Natural killer cell (primary cell): ENCODE measurements at regions of chr7 and their contacts with region 1.

Region 1: DNA sequence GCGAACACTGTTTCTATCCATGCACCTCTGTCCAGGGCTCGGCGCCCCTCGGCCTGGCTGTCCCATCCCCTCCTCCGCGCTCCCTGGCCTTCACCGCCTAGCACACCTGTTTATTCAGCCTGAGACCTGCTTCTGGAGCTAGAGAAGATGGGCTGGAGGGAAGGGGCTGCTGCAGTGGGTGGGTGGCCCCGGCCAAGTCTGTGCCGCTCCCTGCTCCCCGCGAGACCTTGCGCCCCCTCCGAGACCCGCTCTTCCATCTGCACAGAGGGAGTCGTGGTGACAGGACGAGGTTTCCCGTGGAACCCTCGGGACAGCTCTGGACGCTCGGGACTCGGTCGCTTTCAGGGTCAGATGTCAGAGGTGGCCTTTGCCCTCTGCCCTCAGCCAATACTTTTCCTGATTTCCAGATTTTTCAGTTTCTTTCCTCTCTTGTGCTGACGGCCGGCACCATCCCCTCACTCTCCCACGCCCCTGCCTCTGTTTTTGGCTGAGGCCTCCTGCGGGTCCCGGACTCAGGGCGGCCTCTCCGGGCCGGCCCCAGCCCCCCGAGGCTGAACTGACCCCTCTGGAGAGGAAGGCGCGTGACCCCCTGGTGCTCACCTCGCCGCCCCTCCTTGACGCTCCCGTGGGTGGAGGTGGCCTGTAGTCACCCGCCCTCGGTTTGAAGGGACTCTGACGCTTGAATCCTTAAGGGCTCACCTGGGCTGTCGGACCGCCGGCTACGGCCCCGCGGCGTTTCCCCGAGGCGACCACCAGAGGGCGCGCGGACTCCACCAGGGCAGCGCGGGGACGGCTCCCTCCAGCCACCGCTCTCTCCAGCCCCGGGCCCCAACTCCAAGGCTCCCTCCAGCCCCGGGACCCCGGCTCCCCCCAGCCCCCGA is 15.6 kb downstream of the SHH start:
- DNase-seq: peak; percentile 64 to 72
- ATAC-seq: peak; percentile 63 to 95 (median 72)
- H3K4me3 ChIP-seq: no peak overlapping the region
- H3K4me3 Mint-ChIP-seq: no peak overlapping the region
- H3K27ac ChIP-seq: no peak overlapping the region
- H3K27ac Mint-ChIP-seq: no peak overlapping the region
- H3K4me1 ChIP-seq: peaks cover 7% of the 10 kb centered on the region
- H3K4me1 Mint-ChIP-seq: peaks cover 0 to 7% of the 10 kb centered on the region in 2 donors
- H3K27me3 ChIP-seq: peaks cover 2% of the 10 kb centered on the region
- H3K27me3 Mint-ChIP-seq: peaks cover 21 to 34% of the 10 kb centered on the region in 2 donors
- CTCF ChIP-seq: peak; percentile 90

Region 2: GRCh38 chr7:155724327-155725005 is 72.2 kb before region 1 on chr7:
- intact Hi-C with region 1: no loop called
- DNase-seq: peak in 1 of 2 donors; percentile 16
- ATAC-seq: no peak
- H3K4me3 ChIP-seq: no peak overlapping the region
- H3K4me3 Mint-ChIP-seq: no peak overlapping the region
- H3K27ac ChIP-seq: peak overlapping the region; percentile 35
- H3K27ac Mint-ChIP-seq: peak overlapping the region in 1 of 2 donors; percentile 33
- H3K4me1 ChIP-seq: peaks cover 3% of the 10 kb centered on the region
- H3K4me1 Mint-ChIP-seq: peaks cover 44 to 55% of the 10 kb centered on the region in 2 donors
- H3K27me3 ChIP-seq: no peaks in the 10 kb centered on the region
- H3K27me3 Mint-ChIP-seq: no peaks in the 10 kb centered on the region
- CTCF ChIP-seq: no peak

Region 3: DNA sequence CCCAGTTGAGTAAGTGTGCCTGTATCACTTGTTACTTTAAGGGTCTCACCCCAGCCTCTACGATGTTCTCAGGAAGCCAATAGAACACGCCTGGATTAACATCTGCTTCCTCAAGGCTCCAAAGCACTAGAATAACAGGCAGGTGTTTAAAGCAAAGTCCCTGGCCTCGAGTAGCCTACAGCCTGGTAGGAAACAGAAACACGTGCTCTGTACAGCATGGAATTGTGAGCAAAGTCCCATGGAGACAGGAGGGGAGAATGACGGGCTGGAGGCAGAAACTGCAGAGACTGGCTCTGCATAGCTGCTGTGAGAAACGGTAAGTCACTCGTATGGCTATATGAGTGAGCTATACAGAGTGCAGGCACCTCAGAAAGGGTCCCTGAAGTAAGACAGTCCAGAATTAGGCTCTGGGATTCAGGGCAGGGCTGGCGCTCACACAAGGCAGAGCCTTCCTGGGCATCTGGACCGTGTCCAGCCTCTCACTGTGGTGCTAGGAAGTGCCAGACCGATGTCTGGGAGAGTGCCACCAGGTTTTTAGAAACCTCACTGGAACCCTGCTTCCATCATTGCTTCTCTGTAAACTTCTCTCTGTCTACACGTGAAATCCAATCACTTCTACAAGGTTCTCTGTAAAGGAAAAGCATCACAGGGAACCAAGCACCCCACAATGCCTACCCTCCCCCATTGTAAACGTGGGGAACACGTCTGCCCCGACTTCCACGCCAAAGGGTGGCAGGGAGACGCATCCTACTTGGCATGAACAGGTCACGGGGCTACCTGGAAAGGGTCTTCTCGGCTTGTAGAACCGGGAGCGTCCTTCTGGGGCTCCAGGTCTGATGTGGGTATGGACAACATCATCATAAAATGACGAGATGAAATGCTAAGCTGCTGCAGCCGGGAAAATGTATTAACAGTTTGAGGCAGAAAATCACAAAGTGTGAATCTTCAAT is 54.4 kb after region 1 on chr7:
- intact Hi-C with region 1: no loop called
- DNase-seq: no peak
- ATAC-seq: no peak
- H3K4me3 ChIP-seq: no peak overlapping the region
- H3K4me3 Mint-ChIP-seq: no peak overlapping the region
- H3K27ac ChIP-seq: no peak overlapping the region
- H3K27ac Mint-ChIP-seq: no peak overlapping the region
- H3K4me1 ChIP-seq: no peaks in the 10 kb centered on the region
- H3K4me1 Mint-ChIP-seq: no peaks in the 10 kb centered on the region
- H3K27me3 ChIP-seq: no peaks in the 10 kb centered on the region
- H3K27me3 Mint-ChIP-seq: peaks cover 3 to 10% of the 10 kb centered on the region in 2 donors
- CTCF ChIP-seq: no peak

Region 4: DNA sequence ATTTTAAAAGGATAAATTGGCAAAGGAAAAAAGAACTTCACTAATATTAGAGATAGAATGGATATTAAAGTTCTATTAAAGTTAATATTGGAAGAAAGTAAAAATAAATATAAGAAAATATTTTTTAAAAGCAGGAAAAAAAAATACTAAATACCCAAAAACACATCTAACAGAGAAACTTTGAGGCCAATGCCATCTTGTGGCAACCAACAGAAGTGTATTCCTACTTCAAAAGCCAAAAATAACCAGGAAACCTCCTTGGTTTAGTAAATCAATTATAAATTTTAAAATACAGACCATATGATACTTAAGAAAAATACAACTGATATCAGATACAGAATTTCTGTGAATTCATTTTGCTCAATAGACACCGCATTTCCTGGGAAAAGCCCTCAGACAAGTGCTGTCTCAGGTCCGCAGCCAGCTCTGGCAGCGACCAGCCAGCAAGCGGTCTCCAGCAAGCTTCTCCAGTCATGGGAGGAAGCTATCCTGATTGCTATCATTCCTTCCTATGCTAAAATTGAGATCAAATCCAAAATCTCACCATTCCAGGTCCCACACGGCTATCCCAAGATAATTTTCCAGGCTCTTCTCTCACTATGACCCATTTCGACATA is 1031.1 kb after region 1 on chr7:
- intact Hi-C with region 1: loop called (anchors 10 kb)
- DNase-seq: peak in 1 of 2 donors; percentile 44
- ATAC-seq: no peak
- H3K4me3 ChIP-seq: no peak overlapping the region
- H3K4me3 Mint-ChIP-seq: no peak overlapping the region
- H3K27ac ChIP-seq: no peak overlapping the region
- H3K27ac Mint-ChIP-seq: no peak overlapping the region
- H3K4me1 ChIP-seq: peaks cover 4% of the 10 kb centered on the region
- H3K4me1 Mint-ChIP-seq: no peaks in the 10 kb centered on the region
- H3K27me3 ChIP-seq: no peaks in the 10 kb centered on the region
- H3K27me3 Mint-ChIP-seq: no peaks in the 10 kb centered on the region
- CTCF ChIP-seq: peak; percentile 32